ENCODE measurements at regions of chr3 and their contacts with region 1.

Region 1: DNA sequence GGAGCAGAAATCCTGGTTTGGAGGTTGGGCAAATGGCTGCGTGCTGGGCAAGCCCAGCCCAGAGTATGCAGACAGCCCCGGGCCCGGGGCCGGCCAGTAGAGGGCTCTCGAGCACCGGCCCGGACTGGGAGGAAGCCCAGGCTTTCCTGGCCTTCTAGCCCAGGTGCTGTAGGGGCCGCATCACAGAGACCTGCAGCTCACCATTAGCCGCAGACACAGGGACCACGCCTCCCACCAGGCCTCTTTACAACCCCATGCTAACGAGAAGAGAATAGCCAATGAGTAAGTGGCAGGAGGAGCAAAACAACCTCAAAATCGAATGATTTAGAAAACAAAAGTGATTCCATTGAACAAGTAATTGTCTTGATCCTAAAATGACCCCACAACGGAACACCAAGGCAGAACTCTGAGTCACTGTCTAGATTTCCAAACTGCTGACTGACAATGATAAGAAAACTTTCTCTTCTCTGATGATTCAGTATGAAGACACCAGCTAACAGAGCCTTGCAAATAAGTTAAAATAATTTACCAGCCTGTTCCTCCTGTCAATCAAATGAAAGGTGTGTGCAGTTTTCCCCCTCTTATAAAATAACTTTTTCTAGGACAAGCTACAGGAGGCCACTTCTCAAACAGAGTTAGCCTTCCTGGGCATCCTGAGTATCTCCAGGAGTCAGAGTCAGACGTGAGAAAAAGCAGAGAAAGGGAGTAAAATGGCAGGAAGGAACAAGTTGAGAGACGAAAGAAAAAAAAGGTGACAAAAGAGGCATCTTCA is 102.2 kb downstream of the DGKG start:
- DNase-seq: peak in 3 of 4 donors; percentile 53 to 93 (median 67)
- ATAC-seq: peak; percentile 97
- H3K4me3 ChIP-seq: no peak overlapping the region
- H3K27ac ChIP-seq: no peak overlapping the region
- H3K4me1 ChIP-seq: no peaks in the 10 kb centered on the region
- H3K27me3 ChIP-seq: no peaks in the 10 kb centered on the region
- CTCF ChIP-seq: peak; percentile 77 to 82

Region 2: GRCh38 chr3:186097663-186098451 is 161.9 kb before region 1 on chr3:
- intact Hi-C with region 1: no loop called
- DNase-seq: peak; percentile 71 to 92 (median 80)
- ATAC-seq: peak; percentile 86
- H3K4me3 ChIP-seq: peak overlapping the region in 1 of 2 donors; percentile 3
- H3K27ac ChIP-seq: peak overlapping the region; percentile 2 to 37
- H3K4me1 ChIP-seq: peaks cover 18 to 63% of the 10 kb centered on the region in 2 donors
- H3K27me3 ChIP-seq: peaks cover 0 to 19% of the 10 kb centered on the region in 2 donors
- CTCF ChIP-seq: no peak

Region 3: DNA sequence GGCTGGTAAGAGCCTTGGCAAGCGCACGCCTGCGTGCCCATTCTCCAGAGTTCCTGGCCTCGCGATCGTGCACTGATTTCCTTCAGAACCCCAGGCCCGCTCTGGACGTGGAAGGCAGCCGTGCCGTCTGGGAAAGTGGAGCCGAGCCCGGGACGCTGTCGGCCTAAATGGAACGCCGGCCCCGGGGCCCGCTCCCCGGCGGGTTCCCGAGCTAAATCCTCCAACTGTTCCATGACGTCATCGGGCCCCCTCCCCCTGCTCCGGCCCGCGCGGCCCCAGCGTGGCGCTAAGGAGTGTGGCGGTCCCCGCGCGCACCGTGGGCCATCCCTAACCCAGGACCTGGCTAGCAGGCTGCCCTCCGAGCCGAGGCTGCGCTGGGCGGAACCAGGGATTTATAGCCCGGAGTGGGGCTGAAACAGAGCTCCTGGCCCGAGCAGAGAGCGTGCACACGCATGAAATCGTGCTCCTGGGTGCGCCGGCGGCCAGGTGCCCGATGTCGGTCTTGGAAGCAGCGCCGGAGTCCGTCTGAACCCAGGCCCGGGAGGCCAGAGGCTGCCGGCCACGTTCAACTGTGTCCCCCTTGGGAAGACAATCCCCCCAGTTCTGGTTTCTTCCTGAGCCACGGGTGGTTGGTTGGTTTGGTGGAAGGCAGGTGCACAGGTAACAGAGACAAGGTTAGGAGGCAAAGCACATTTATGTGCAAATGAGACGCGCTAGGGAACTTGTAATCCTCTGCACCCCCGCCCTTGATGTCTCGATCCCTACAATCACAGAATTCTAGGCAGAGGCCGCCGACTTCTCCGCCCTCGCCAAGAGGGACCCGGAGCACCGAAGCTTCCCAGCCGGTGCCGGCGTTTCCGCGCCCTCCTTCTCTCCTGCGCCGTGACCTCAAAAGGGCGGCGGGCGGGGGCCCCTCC is 66.0 kb before region 1 on chr3:
- intact Hi-C with region 1: no loop called
- DNase-seq: peak in 3 of 4 donors; percentile 40 to 74 (median 70)
- ATAC-seq: peak; percentile 86
- H3K4me3 ChIP-seq: peak overlapping the region in 1 of 2 donors; percentile 16
- H3K27ac ChIP-seq: no peak overlapping the region
- H3K4me1 ChIP-seq: peaks cover 0 to 5% of the 10 kb centered on the region in 2 donors
- H3K27me3 ChIP-seq: peaks cover 17 to 36% of the 10 kb centered on the region in 2 donors
- CTCF ChIP-seq: no peak

Region 4: DNA sequence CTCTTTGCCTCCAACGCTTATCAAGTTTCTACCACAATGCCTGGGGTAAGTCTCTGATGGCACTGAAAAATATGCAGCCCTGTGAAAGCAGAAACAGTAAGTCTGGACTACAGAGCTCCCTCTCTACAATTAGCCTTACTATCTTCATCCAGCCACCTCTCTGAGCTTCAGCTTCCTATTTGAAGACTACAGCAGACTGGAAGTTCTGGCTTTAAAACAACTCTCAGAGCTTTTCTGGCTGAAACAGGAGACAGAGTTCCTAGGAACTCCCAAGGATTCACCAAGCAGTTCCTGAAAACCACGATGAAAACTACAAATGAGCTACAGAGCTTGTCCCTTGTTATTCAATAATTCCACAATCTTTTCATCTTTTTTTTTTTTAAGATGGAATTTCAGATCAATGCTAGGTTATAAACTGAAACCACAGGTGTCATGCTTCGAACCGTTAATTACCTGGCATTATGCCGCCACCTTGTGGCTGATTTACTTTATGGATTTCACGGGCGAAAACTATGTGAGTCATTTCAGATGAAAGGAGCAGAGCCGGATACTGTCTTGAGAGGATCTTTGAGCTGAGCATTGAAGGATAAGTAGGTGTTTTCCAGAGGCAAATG is 280.5 kb after region 1 on chr3:
- intact Hi-C with region 1: loop called in 1 of 2 experiments (anchors 5 kb)
- DNase-seq: peak in 3 of 4 donors; percentile 48 to 72 (median 52)
- ATAC-seq: peak; percentile 96
- H3K4me3 ChIP-seq: no peak overlapping the region
- H3K27ac ChIP-seq: no peak overlapping the region
- H3K4me1 ChIP-seq: peaks cover 3 to 11% of the 10 kb centered on the region in 2 donors
- H3K27me3 ChIP-seq: no peaks in the 10 kb centered on the region
- CTCF ChIP-seq: peak; percentile 58 to 80

Measured in left lung (tissue), 14 donors.